ENCODE measurements at regions of chr11 and their contacts with region 1.

Region 1: GRCh38 chr11:67458266-67458665 is 3.1 kb downstream of the CABP4 start:
- DNase-seq: no peak
- ATAC-seq: no peak
- H3K4me3 ChIP-seq: no peak overlapping the region
- H3K27ac ChIP-seq: no peak overlapping the region
- H3K4me1 ChIP-seq: peaks cover 19% of the 10 kb centered on the region
- H3K27me3 ChIP-seq: no peaks in the 10 kb centered on the region
- CTCF ChIP-seq: no peak
- EP300 ChIP-seq: no peak
- POLR2A ChIP-seq: no peak
- RAD21 ChIP-seq: no peak

Region 2: DNA sequence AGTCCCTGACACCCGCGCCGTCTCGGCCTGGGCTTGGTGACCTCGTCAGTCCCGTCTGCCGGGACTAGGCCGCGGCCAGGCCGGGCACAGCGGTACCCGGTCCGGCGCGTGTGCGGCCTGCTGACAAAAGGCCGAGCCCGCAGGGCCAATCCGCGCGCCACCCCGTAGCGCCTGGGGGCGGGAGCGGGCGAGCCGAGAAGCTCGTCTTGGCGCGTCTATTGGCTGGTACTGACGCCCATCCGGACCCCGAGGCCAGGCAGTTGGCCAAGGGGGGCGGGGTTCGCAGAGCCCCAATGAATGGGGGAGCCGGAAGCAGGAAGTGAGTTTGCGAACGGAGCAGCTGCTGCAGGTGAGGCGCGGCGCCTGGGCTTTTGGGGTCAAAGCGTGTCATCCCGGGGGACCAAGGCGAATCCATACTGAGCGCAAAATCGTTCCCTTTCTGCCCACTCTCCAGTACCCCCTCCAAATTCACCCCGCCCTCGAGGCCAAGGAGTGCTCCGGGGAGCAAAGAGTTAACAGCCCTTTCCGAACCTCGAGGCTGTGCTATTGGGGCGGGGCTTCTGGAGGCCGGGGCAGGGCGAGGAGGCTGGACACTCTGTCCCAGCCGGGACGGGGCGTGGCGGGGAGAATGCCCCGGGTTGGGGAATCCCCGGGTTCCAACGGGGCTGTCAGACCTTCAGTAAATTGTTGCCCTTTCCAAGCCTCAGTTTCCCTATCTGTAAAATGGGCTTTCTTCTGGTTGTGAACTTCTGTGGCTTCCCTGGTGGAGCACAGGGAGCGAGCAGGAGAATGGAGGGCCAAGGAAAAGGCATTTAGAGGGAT is 977.9 kb before region 1 on chr11 and contains the start of gene DPP3:
- CTCF ChIA-PET with region 1: no interaction called
- POLR2A ChIA-PET with region 1: no interaction called
- RAD21 ChIA-PET with region 1: no interaction called
- SMC1A ChIA-PET with region 1: no interaction called
- in situ Hi-C with region 1: no loop called
- intact Hi-C with region 1: no loop called
- DNase-seq: peak; percentile 84
- ATAC-seq: peak; percentile 98
- H3K4me3 ChIP-seq: peak within 1 kb of the TSS; percentile 95
- H3K27ac ChIP-seq: peak within 1 kb of the TSS; percentile 89
- H3K4me1 ChIP-seq: peaks cover 6% of the 10 kb centered on the region
- H3K27me3 ChIP-seq: no peaks in the 10 kb centered on the region
- CTCF ChIP-seq: no peak
- EP300 ChIP-seq: peak in 1 of 2 experiments; percentile 40; a peak in 1 of 4 replicates
- POLR2A ChIP-seq: peak; percentile 94
- RAD21 ChIP-seq: no peak
- polyA plus RNA-seq, gene DPP3: 6.0 to 6.3 TPM

Region 3: GRCh38 chr11:67447848-67448609 is 10.2 kb before region 1 on chr11:
- CTCF ChIA-PET with region 1: interaction called, 6 read pairs
- POLR2A ChIA-PET with region 1: interaction called, 14 read pairs
- RAD21 ChIA-PET with region 1: no interaction called
- SMC1A ChIA-PET with region 1: interaction called, 12 read pairs
- in situ Hi-C with region 1: no loop called
- intact Hi-C with region 1: no loop called
- DNase-seq: no peak
- ATAC-seq: no peak
- H3K4me3 ChIP-seq: no peak overlapping the region
- H3K27ac ChIP-seq: no peak overlapping the region
- H3K4me1 ChIP-seq: peaks cover 32% of the 10 kb centered on the region
- H3K27me3 ChIP-seq: no peaks in the 10 kb centered on the region
- CTCF ChIP-seq: no peak
- EP300 ChIP-seq: no peak
- POLR2A ChIP-seq: 0 out of 2 replicates have a peak, but pooled peaks have one; percentile 19
- RAD21 ChIP-seq: no peak

Measured in GM12878 (cell line).